Activated naive CD4-positive, alpha-beta T cell treated with anti-CD3 and anti-CD28 coated beads for 36 hours (primary cell): ENCODE measurements at regions of chr14 and their contacts with region 1.

Region 1: DNA sequence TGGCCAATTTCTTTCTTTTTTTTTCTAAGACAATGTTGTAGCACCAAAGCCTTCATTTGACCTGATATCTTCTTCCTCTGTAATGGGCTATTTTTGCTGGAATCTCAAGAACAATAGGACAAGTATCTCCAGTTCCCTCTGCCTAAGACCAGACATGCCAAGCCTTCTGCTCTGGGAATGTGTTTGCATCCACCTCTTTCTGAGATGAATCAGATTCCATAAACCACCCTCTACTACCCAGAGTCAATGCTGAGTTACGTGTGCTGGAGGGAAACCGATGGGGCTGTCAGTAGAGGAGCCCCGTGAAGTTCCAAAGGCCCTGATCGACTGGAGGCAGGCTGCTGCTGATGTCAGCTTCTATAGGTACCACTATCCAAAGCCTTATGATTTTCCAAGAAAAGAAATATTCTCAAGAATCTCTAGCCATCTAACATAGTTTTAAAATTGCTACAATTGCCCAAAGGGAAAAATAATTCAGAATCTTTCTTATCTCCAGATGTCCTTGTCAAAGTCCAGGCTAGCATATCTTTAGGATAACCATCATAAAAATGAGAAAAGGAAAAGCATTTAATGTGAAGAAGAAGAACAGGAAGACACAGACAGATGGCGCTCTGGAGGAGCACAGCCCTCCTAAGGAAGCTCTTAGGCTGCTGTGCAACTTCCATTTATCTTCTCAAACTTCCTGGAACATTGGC is 101.9 kb downstream of the SLC8A3 start:
- DNase-seq: peak; percentile 37
- H3K4me3 Mint-ChIP-seq: no peak overlapping the region
- H3K27ac Mint-ChIP-seq: no peak overlapping the region
- H3K4me1 Mint-ChIP-seq: no peaks in the 10 kb centered on the region
- H3K27me3 Mint-ChIP-seq: peaks cover 24% of the 10 kb centered on the region

Region 2: DNA sequence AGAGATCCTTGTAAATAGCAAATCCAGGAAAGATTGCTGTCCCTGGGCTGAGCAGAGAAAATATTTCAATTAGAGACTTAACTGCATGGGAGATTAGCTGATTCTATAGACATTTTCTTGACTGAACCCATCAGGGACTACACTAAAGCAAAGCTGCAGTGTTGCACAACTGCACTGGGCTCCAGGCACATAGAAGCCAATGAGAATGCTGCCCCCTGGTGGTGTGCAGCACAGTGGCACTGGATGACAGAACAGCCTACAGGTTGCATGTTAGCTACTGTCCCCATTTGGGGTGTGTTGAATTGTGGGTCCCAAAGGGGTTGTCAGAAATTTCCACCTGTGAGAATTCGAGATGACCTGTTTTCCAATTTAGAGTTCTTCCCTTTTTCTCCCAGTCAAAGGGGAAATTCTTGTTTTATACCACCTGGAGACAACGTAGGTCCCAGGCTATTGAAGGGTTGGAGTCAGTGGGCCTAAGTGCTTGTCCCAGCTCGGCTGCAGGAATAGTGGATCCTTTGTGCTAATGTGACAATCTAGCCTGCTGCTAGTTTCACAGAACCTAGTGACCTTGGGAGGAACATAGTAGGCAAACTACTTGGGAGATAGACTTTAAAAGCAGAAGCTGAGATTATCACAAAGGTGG is 12.8 kb before region 1 on chr14:
- CTCF ChIA-PET with region 1: interaction called, 11 read pairs
- intact Hi-C with region 1: no loop called
- DNase-seq: peak; percentile 81
- H3K4me3 Mint-ChIP-seq: no peak overlapping the region
- H3K27ac Mint-ChIP-seq: no peak overlapping the region
- H3K4me1 Mint-ChIP-seq: no peaks in the 10 kb centered on the region
- H3K27me3 Mint-ChIP-seq: peaks cover 2% of the 10 kb centered on the region

Region 3: GRCh38 chr14:70257531-70257930 is 170.7 kb after region 1 on chr14:
- CTCF ChIA-PET with region 1: no interaction called
- intact Hi-C with region 1: loop called (anchors 2 kb)
- DNase-seq: peak; percentile 46
- H3K4me3 Mint-ChIP-seq: no peak overlapping the region
- H3K27ac Mint-ChIP-seq: no peak overlapping the region
- H3K4me1 Mint-ChIP-seq: peaks cover 5% of the 10 kb centered on the region
- H3K27me3 Mint-ChIP-seq: peaks cover 35% of the 10 kb centered on the region

Region 4: DNA sequence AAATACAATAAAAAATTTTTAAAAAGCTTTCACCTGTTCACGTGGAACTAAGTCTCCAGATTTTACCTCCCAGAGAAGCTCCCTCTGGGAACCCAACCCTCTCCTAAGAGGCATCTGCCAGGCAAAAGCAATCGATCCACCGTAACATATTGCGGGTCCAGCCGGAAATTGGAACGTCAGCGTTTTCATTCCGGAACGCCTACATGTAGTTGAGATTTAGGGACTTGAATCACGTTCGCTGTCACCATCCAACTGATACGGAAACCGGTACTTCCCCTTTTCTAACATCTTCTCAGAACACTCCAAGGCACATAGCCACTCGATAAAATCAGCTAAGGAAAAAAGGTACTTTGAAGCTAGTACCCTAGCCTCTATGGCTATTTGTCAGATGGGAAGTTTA is 202.3 kb after region 1 on chr14:
- CTCF ChIA-PET with region 1: no interaction called
- intact Hi-C with region 1: loop called (anchors 1 kb)
- DNase-seq: peak; percentile 82
- H3K4me3 Mint-ChIP-seq: peak overlapping the region; percentile 20
- H3K27ac Mint-ChIP-seq: no peak overlapping the region
- H3K4me1 Mint-ChIP-seq: no peaks in the 10 kb centered on the region
- H3K27me3 Mint-ChIP-seq: peaks cover 3% of the 10 kb centered on the region

Region 5: GRCh38 chr14:70339044-70339443 is 252.2 kb after region 1 on chr14:
- CTCF ChIA-PET with region 1: no interaction called
- intact Hi-C with region 1: no loop called
- DNase-seq: no peak
- H3K4me3 Mint-ChIP-seq: no peak overlapping the region
- H3K27ac Mint-ChIP-seq: no peak overlapping the region
- H3K4me1 Mint-ChIP-seq: peaks cover 14% of the 10 kb centered on the region
- H3K27me3 Mint-ChIP-seq: no peaks in the 10 kb centered on the region